ENCODE measurements at regions of chr1 and their contacts with region 1.

Region 1: GRCh38 chr1:42173155-42173933 is 8.8 kb upstream of the GUCA2A start:
- DNase-seq: peak; percentile 74
- H3K4me3 Mint-ChIP-seq: no peak overlapping the region
- H3K27ac Mint-ChIP-seq: no peak overlapping the region
- H3K4me1 Mint-ChIP-seq: no peaks in the 10 kb centered on the region
- H3K27me3 Mint-ChIP-seq: no peaks in the 10 kb centered on the region

Region 2: GRCh38 chr1:41876576-41877445 is 296.5 kb before region 1 on chr1:
- CTCF ChIA-PET with region 1: no interaction called
- POLR2A ChIA-PET with region 1: no interaction called
- intact Hi-C with region 1: no loop called
- DNase-seq: no peak
- H3K4me3 Mint-ChIP-seq: no peak overlapping the region
- H3K27ac Mint-ChIP-seq: no peak overlapping the region
- H3K4me1 Mint-ChIP-seq: peaks cover 12% of the 10 kb centered on the region
- H3K27me3 Mint-ChIP-seq: no peaks in the 10 kb centered on the region

Region 3: DNA sequence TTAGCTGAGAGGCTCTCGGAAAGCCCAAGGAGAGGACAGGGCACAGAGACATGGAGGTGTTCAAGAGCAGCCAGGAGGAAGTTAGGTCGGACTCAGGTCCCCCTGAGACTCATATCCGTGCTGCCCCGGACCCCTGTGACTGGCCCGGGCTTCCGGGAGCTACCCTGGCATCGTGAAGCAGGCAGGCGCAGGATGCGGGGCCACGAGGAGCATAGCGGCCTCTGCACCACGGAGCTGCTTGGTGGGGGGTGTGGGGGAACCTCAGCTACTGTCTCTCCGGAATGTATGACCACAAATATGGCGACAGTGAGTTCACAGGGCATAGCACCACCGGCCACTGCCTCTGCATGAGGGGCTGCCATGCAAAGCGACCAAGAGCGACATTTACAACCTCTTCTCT is 132.3 kb before region 1 on chr1:
- CTCF ChIA-PET with region 1: no interaction called
- POLR2A ChIA-PET with region 1: no interaction called
- intact Hi-C with region 1: no loop called
- DNase-seq: no peak
- H3K4me3 Mint-ChIP-seq: no peak overlapping the region
- H3K27ac Mint-ChIP-seq: no peak overlapping the region
- H3K4me1 Mint-ChIP-seq: peaks cover 3% of the 10 kb centered on the region
- H3K27me3 Mint-ChIP-seq: peaks cover 1% of the 10 kb centered on the region

Region 4: DNA sequence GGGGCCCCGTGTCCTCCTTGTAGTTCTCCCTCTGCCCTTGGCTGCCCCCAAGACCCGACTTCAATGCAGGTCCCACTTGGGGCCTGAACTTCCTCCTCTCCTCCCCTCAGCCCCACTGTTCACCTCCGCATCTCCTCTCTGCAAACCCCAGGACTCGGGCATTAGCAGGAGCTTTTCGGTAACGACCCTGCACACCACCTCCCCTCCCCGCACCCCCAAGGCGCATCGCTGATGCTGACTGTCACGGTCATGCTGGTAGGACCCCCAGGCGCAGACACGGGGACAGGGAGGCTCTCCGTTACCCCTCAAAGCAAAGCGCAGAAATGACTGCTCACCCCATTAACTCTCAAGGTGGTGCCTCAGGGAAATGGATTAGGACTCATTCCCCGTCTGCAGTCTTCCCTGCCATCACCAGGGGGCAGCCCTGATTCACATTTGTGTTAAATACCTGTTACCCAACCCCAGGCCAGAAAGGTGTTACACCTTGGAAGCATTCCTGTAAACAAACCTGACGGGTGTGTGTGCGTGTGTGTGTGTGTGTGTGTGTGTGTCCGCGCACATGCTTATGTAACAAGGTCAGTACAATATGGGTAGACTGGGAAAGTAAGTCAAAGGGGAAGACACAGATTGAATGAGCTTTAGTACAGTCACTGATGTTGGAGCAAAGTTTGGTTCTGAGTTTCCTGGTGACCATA is 26.6 kb before region 1 on chr1:
- CTCF ChIA-PET with region 1: interaction called, 21 read pairs
- POLR2A ChIA-PET with region 1: no interaction called
- intact Hi-C with region 1: loop called (anchors 2 kb)
- DNase-seq: peak; percentile 80
- H3K4me3 Mint-ChIP-seq: no peak overlapping the region
- H3K27ac Mint-ChIP-seq: no peak overlapping the region
- H3K4me1 Mint-ChIP-seq: peaks cover 5% of the 10 kb centered on the region
- H3K27me3 Mint-ChIP-seq: peaks cover 2% of the 10 kb centered on the region

Region 5: DNA sequence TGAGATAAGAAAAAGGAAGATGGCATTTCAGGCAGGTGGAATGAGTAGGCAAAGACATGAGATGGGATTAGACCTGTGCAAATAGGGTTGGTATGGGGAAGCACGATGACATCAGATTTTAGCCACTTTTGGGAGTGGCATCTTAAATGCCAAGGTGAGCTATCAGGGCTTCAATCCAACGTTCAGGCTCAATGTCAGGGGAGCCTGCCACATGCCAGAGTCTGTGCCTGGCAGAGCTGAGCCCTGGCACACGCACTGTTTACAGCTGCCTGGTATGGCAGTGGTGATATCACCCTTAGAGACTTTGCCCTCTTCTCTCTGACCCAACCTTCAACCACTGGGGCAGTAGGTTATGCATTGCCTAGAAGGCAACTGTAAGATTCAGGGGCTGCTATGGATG is 21.2 kb before region 1 on chr1:
- CTCF ChIA-PET with region 1: interaction called, 21 read pairs
- POLR2A ChIA-PET with region 1: no interaction called
- intact Hi-C with region 1: loop called (anchors 2 kb)
- DNase-seq: no peak
- H3K4me3 Mint-ChIP-seq: no peak overlapping the region
- H3K27ac Mint-ChIP-seq: no peak overlapping the region
- H3K4me1 Mint-ChIP-seq: no peaks in the 10 kb centered on the region
- H3K27me3 Mint-ChIP-seq: peaks cover 3% of the 10 kb centered on the region

Region 6: DNA sequence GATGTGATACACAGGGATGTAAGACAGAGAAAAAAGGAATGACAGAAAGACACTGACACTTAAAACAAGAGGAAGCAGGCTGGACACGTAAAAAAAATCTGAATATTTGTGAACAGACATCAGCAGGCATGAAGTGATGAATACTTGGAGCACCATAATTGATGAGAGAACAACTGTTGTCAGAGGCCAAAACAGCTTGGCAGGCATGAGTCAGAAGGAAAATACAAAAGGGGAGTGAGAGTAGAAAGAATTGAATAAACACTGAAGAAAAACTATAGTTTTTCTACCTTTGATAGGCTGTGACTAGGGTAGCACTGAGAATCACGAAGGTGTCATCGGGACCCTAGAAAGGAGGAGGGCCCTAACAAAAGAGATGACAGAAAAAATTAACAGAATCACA is 12.8 kb after region 1 on chr1:
- CTCF ChIA-PET with region 1: interaction called, 16 read pairs
- POLR2A ChIA-PET with region 1: no interaction called
- intact Hi-C with region 1: no loop called
- DNase-seq: no peak
- H3K4me3 Mint-ChIP-seq: no peak overlapping the region
- H3K27ac Mint-ChIP-seq: peak overlapping the region; percentile 70
- H3K4me1 Mint-ChIP-seq: peaks cover 9% of the 10 kb centered on the region
- H3K27me3 Mint-ChIP-seq: no peaks in the 10 kb centered on the region

Region 7: DNA sequence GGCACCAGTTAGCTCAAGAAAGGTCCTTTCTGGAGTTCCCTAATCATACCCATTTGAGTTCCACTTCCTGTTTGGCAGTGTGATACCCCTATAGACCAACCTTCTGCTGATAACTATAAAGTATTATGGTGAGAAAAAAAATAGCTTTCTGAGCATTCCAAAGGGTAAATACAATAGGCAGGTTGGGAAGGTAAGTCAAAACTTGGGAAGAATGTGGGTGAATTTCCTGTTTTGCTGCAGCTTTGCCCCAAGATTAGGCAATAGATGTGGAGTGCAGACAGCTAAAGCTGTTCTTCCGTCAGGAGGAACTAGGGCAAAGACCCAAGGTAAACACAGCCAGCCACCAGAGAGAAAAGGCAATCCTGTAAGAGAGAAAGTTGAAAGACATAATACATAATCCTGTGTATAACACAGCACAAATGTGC is 41.1 kb after region 1 on chr1:
- CTCF ChIA-PET with region 1: interaction called, 11 read pairs
- POLR2A ChIA-PET with region 1: no interaction called
- intact Hi-C with region 1: no loop called
- DNase-seq: no peak
- H3K4me3 Mint-ChIP-seq: no peak overlapping the region
- H3K27ac Mint-ChIP-seq: no peak overlapping the region
- H3K4me1 Mint-ChIP-seq: peaks cover 25% of the 10 kb centered on the region
- H3K27me3 Mint-ChIP-seq: no peaks in the 10 kb centered on the region